ENCODE measurements at regions of chr14 and their contacts with region 1.

Region 1: DNA sequence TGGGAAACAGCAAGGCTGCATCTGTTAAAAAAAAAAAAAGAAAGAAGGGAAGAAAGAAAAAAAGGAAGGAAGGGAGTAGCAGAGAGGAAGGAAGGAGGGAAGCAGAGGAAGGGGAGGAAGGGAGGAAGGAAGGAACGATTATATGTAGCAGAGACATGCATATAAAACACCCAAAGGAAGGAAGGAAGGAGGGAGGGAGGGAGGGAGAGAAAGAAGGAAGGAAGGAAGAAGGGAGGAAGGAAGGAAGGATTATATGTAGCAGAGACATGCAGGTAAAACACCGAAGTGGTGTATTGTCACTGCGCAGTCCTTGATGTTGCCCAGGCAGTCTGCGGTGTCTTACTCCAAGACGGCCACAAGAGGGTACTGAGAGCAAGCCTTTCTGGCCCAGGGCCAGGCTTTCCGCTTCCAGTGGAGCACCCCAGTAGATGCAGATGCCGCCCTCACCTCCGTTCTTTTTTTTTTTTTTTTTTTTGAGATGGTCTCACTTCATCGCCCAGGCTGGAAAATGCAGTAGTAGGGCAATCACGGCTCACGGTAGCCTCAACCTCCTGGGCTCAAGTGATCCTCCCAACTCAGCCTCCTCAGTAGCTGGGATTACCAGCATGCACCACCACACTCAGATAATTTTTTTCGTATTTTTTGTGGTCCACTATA is 5.8 kb upstream of the LBHD2 start:
- DNase-seq: peak; percentile 71 to 84 (median 79)
- H3K4me3 ChIP-seq: no peak overlapping the region
- H3K4me3 Mint-ChIP-seq: no peak overlapping the region
- H3K27ac ChIP-seq: no peak overlapping the region
- H3K27ac Mint-ChIP-seq: peak overlapping the region in 1 of 7 donors; percentile 13
- H3K4me1 ChIP-seq: peaks cover 9 to 17% of the 10 kb centered on the region in 2 donors
- H3K4me1 Mint-ChIP-seq: peaks cover 2% of the 10 kb centered on the region
- H3K27me3 ChIP-seq: peaks cover 0 to 32% of the 10 kb centered on the region in 2 donors
- H3K27me3 Mint-ChIP-seq: peaks cover 5 to 32% (median 17%) of the 10 kb centered on the region in 3 donors
- CTCF ChIP-seq: peak; percentile 80

Region 2: GRCh38 chr14:103126493-103127304 is 48.5 kb after region 1 on chr14:
- intact Hi-C with region 1: no loop called
- DNase-seq: no peak
- H3K4me3 ChIP-seq: peak overlapping the region in 2 of 3 experiments; percentile 13 to 95
- H3K4me3 Mint-ChIP-seq: peak overlapping the region; percentile 80 to 95
- H3K27ac ChIP-seq: peak overlapping the region in 1 of 2 donors; percentile 99
- H3K27ac Mint-ChIP-seq: peak overlapping the region in 4 of 7 donors; percentile 39 to 77 (median 58)
- H3K4me1 ChIP-seq: peaks cover 47 to 65% of the 10 kb centered on the region in 2 donors
- H3K4me1 Mint-ChIP-seq: peaks cover 41% of the 10 kb centered on the region
- H3K27me3 ChIP-seq: no peaks in the 10 kb centered on the region
- H3K27me3 Mint-ChIP-seq: peaks cover 0 to 1% (median 0%) of the 10 kb centered on the region in 3 donors
- CTCF ChIP-seq: no peak

Region 3: GRCh38 chr14:103141119-103141796 is 63.0 kb after region 1 on chr14:
- intact Hi-C with region 1: loop called in 1 of 2 experiments (anchors 2 kb)
- DNase-seq: peak; percentile 36 to 64 (median 41)
- H3K4me3 ChIP-seq: no peak overlapping the region
- H3K4me3 Mint-ChIP-seq: no peak overlapping the region
- H3K27ac ChIP-seq: no peak overlapping the region
- H3K27ac Mint-ChIP-seq: no peak overlapping the region
- H3K4me1 ChIP-seq: peaks cover 15 to 27% of the 10 kb centered on the region in 2 donors
- H3K4me1 Mint-ChIP-seq: peaks cover 24% of the 10 kb centered on the region
- H3K27me3 ChIP-seq: peaks cover 0 to 21% of the 10 kb centered on the region in 2 donors
- H3K27me3 Mint-ChIP-seq: peaks cover 28 to 43% (median 36%) of the 10 kb centered on the region in 3 donors
- CTCF ChIP-seq: peak; percentile 79

Region 4: DNA sequence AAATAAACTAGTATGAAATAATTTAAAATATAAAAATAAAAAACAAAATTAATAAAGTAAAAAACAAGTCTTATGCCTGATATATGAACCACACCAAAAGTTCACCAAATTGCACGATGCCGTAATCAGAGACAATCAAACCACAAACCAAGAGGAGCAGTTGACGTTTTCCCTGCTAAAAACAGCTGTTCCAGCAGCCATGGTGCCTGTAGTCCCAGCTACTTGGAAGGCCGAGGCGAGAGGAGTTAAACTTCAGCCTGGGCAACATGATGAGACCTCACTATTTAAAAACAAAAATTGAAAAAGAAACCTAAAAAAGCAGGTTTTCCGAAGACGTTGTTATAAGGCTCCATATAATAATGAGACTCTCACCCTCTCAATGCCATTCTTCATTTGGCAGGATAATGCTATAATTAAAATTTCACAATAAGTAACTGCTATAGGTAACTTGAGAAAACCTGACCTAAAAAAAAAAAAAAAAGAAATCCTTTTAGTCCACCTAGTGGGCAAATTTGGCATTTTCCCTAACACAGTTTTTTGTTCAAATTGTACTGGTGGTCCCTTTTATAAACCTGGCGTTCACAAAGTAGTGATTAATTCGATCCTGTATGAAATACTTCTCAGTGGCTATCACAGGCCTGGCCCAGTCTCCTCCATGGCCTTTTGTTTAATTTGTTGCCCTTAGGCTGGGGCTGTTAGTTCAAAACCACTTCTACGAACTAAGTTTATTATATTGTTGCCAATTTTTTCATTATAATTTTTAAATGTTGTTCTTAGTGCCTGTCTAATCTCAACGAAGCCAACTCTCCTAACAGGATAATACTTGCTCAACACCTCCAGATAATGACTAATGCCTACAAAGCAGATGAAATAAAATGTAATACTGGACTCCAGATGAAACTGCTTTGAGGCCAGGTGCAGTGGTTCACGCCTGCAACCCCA is 107.1 kb after region 1 on chr14:
- intact Hi-C with region 1: loop called in 1 of 2 experiments (anchors 10 kb)
- DNase-seq: peak in 1 of 3 donors; percentile 25
- H3K4me3 ChIP-seq: no peak overlapping the region
- H3K4me3 Mint-ChIP-seq: peak overlapping the region in 1 of 2 donors; percentile 72
- H3K27ac ChIP-seq: no peak overlapping the region
- H3K27ac Mint-ChIP-seq: peak overlapping the region in 1 of 7 donors; percentile 78
- H3K4me1 ChIP-seq: peaks cover 2 to 9% of the 10 kb centered on the region in 2 donors
- H3K4me1 Mint-ChIP-seq: peaks cover 4% of the 10 kb centered on the region
- H3K27me3 ChIP-seq: peaks cover 37 to 42% of the 10 kb centered on the region in 2 donors
- H3K27me3 Mint-ChIP-seq: peaks cover 40 to 54% (median 53%) of the 10 kb centered on the region in 3 donors
- CTCF ChIP-seq: peak; percentile 82

Region 5: GRCh38 chr14:103292426-103293374 is 214.5 kb after region 1 on chr14:
- intact Hi-C with region 1: loop called (anchors 2 kb)
- DNase-seq: peak; percentile 63 to 76 (median 67)
- H3K4me3 ChIP-seq: no peak overlapping the region
- H3K4me3 Mint-ChIP-seq: peak overlapping the region in 1 of 2 donors; percentile 30
- H3K27ac ChIP-seq: no peak overlapping the region
- H3K27ac Mint-ChIP-seq: no peak overlapping the region
- H3K4me1 ChIP-seq: no peaks in the 10 kb centered on the region
- H3K4me1 Mint-ChIP-seq: no peaks in the 10 kb centered on the region
- H3K27me3 ChIP-seq: peaks cover 0 to 10% of the 10 kb centered on the region in 2 donors
- H3K27me3 Mint-ChIP-seq: peaks cover 21 to 32% (median 31%) of the 10 kb centered on the region in 3 donors
- CTCF ChIP-seq: peak; percentile 83